GM12878 (cell line): ENCODE measurements at regions of chr6 and their contacts with region 1.

Region 1: DNA sequence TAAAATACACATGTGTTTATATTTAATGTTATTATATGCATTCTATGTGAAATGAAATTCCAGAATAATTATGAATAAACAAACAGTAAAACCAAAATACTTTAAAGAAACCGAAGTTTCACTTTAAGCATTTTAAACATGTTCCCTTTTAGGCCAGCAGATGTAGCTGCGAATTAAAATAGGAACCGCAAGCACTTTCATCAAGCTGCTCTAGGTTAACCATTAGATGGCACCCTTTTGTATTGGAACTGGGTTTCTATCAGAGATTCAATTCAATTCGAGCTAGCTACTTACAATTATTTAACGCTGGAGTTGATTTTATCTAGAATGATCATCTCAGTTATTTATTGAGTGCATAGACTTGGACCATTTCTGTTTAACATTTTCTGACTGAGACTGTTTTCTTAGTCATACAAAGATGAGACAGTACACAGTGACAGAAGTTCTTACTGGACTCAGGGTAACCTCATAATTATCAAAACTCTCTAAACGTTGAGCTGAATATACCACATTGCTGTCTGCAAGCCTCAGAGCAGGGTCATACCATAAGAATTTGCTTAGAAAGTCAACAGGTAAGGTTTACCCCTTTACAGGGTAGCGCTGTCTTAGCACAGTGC is 8.5 kb downstream of the TMEM242 start:
- DNase-seq: peak; percentile 42
- ATAC-seq: peak; percentile 96
- H3K4me3 ChIP-seq: no peak overlapping the region
- H3K27ac ChIP-seq: no peak overlapping the region
- H3K4me1 ChIP-seq: no peaks in the 10 kb centered on the region
- H3K27me3 ChIP-seq: no peaks in the 10 kb centered on the region
- CTCF ChIP-seq: peak; percentile 80 to 100 (median 91); a peak in 5 of 6 replicates
- EP300 ChIP-seq: no peak
- POLR2A ChIP-seq: no peak
- RAD21 ChIP-seq: peak; percentile 99

Region 2: DNA sequence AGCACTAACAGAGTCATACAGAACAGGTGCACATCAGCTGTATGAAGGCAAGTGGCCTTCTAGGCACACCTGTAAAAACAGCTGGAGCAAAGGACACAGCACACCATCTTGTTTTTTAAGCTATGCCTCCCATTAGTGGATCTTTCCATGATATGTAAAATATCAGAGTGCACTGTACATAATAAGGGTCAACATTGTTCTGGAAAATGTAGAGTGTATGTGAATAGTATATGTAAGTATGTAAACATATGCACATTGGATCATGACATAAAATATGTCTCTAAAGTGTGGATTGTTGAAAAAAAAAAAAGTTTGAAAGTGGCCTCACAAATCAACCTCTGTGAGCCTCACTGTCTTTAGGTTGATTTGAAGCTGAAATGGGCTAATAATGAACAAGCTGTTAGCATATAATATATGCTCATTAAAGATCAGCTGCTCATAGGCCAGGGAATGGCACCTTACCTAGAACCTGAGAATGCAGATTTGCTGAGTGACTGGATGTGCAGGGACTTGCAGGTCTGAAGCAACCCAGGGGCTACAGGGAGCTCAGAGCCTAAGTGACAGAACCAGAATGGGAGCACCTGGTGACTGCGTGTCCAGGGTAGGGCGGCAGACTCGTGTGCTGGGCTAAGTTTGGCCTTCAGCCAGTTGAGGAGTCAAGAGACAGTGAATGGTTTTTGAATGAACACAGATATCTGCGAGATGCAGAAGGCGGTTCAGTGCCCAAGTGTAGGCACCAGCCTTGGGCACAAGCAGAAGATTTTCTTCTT is 190.1 kb before region 1 on chr6:
- CTCF ChIA-PET with region 1: no interaction called
- POLR2A ChIA-PET with region 1: no interaction called
- RAD21 ChIA-PET with region 1: no interaction called
- SMC1A ChIA-PET with region 1: no interaction called
- in situ Hi-C with region 1: no loop called
- intact Hi-C with region 1: no loop called
- DNase-seq: no peak
- ATAC-seq: no peak
- H3K4me3 ChIP-seq: no peak overlapping the region
- H3K27ac ChIP-seq: no peak overlapping the region
- H3K4me1 ChIP-seq: no peaks in the 10 kb centered on the region
- H3K27me3 ChIP-seq: no peaks in the 10 kb centered on the region
- CTCF ChIP-seq: no peak
- EP300 ChIP-seq: no peak
- POLR2A ChIP-seq: no peak
- RAD21 ChIP-seq: no peak

Region 3: GRCh38 chr6:157368359-157369049 is 53.7 kb after region 1 on chr6:
- CTCF ChIA-PET with region 1: interaction called, 13 read pairs
- POLR2A ChIA-PET with region 1: no interaction called
- RAD21 ChIA-PET with region 1: interaction called, 7 read pairs
- SMC1A ChIA-PET with region 1: interaction called, 3 read pairs
- in situ Hi-C with region 1: no loop called
- intact Hi-C with region 1: no loop called
- DNase-seq: no peak
- ATAC-seq: peak; percentile 49
- H3K4me3 ChIP-seq: no peak overlapping the region
- H3K27ac ChIP-seq: no peak overlapping the region
- H3K4me1 ChIP-seq: peaks cover 15% of the 10 kb centered on the region
- H3K27me3 ChIP-seq: peaks cover 0 to 12% of the 10 kb centered on the region in 2 experiments; a peak in 3 of 4 replicates
- CTCF ChIP-seq: no peak
- EP300 ChIP-seq: no peak
- POLR2A ChIP-seq: no peak
- RAD21 ChIP-seq: no peak

Region 4: DNA sequence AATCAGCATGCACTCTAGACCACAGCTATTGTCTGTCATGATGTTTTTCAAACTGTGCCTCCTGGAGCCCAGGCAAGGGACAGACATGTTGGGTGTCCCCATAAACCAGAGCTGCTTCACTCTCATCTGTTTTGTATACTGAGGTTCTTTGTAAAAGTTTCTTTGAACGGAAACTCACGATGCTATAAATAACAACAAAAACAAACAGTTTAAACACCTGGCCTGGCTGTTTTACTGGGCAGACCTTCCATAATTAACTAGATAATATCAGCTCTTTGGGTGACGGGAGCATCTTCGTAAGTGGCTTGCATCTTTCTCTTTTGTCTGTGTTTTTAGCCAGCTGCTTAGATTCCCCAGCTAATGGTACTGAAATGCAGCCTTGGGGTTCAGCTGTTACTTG is 256.5 kb after region 1 on chr6:
- CTCF ChIA-PET with region 1: interaction called, 10 read pairs
- POLR2A ChIA-PET with region 1: no interaction called
- RAD21 ChIA-PET with region 1: interaction called, 6 read pairs
- SMC1A ChIA-PET with region 1: interaction called, 7 read pairs
- in situ Hi-C with region 1: no loop called
- intact Hi-C with region 1: no loop called
- DNase-seq: peak; percentile 68
- ATAC-seq: peak; percentile 69
- H3K4me3 ChIP-seq: no peak overlapping the region
- H3K27ac ChIP-seq: peak overlapping the region; percentile 60
- H3K4me1 ChIP-seq: peaks cover 22% of the 10 kb centered on the region
- H3K27me3 ChIP-seq: no peaks in the 10 kb centered on the region
- CTCF ChIP-seq: 0 out of 6 replicates have a peak, but pooled peaks of 1 of the 3 experiments have one; percentile 9
- EP300 ChIP-seq: peak; percentile 16 to 84; a peak in 1 of 4 replicates
- POLR2A ChIP-seq: no peak
- RAD21 ChIP-seq: no peak

Region 5: DNA sequence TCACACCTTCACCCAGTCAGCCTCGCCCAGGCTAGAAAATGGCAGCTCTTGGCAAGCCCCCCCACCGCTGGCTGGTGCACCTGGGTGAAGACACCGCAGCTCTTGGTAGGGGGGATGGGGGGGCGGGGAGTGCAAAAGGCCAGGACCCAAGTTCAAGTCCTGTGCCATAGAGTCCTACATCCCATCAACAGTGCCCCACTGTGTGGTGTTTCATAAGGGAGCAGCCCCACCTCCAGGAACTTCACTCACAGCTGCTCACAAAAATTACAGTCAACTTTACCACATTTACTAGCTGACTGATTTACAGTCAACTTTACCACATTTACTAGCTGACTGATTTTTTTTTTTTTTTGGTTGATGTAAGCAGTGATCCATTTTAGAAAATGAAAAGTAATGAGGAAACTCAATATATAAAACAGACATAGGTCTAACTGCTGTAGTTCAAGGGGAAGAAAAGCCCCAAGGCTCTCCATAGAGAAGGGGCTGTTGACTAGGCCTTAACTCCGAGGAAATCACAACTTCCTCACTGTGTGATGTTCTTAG is 299.3 kb after region 1 on chr6:
- CTCF ChIA-PET with region 1: interaction called, 29 read pairs
- POLR2A ChIA-PET with region 1: no interaction called
- RAD21 ChIA-PET with region 1: interaction called, 25 read pairs
- SMC1A ChIA-PET with region 1: interaction called, 18 read pairs
- in situ Hi-C with region 1: loop called (anchors 10 kb)
- intact Hi-C with region 1: no loop called
- DNase-seq: no peak
- ATAC-seq: peak; percentile 79
- H3K4me3 ChIP-seq: no peak overlapping the region
- H3K27ac ChIP-seq: no peak overlapping the region
- H3K4me1 ChIP-seq: no peaks in the 10 kb centered on the region
- H3K27me3 ChIP-seq: no peaks in the 10 kb centered on the region
- CTCF ChIP-seq: peak in 2 of 3 experiments; percentile 13 to 44; a peak in 2 of 6 replicates
- EP300 ChIP-seq: no peak
- POLR2A ChIP-seq: no peak
- RAD21 ChIP-seq: peak; percentile 41; the same call in 1 of the 2 replicates

Region 6: GRCh38 chr6:157873735-157874344 is 559.0 kb after region 1 on chr6:
- CTCF ChIA-PET with region 1: interaction called, 24 read pairs
- POLR2A ChIA-PET with region 1: no interaction called
- RAD21 ChIA-PET with region 1: interaction called, 28 read pairs
- SMC1A ChIA-PET with region 1: interaction called, 12 read pairs
- in situ Hi-C with region 1: no loop called
- intact Hi-C with region 1: loop called (anchors 10 kb)
- DNase-seq: peak; percentile 16
- ATAC-seq: peak; percentile 99
- H3K4me3 ChIP-seq: no peak overlapping the region
- H3K27ac ChIP-seq: no peak overlapping the region
- H3K4me1 ChIP-seq: peaks cover 3% of the 10 kb centered on the region; the same call in 1 of the 2 replicates
- H3K27me3 ChIP-seq: peaks cover 0 to 2% of the 10 kb centered on the region in 2 experiments; a peak in 2 of 4 replicates
- CTCF ChIP-seq: peak; percentile 82 to 91 (median 84)
- EP300 ChIP-seq: no peak
- POLR2A ChIP-seq: no peak
- RAD21 ChIP-seq: peak; percentile 86